Mammary epithelial cell (primary cell): ENCODE measurements at regions of chr1 and their contacts with region 1.

Region 1: GRCh38 chr1:43934101-43934985 is 742 bp downstream of the ARTN start:
- DNase-seq: peak; percentile 71
- H3K4me3 ChIP-seq: peak overlapping the region; percentile 69 to 74 (median 70)
- H3K27ac ChIP-seq: peak overlapping the region; percentile 81
- H3K4me1 ChIP-seq: peaks cover 73% of the 10 kb centered on the region
- H3K27me3 ChIP-seq: no peaks in the 10 kb centered on the region
- CTCF ChIP-seq: peak; percentile 89 to 95

Region 2: GRCh38 chr1:43238085-43238484 is 696.3 kb before region 1 on chr1:
- CTCF ChIA-PET with region 1: no interaction called
- dilution Hi-C with region 1: no loop called
- in situ Hi-C with region 1: no loop called
- intact Hi-C with region 1: loop called (anchors 10 kb)
- DNase-seq: peak; percentile 28
- H3K4me3 ChIP-seq: no peak overlapping the region
- H3K27ac ChIP-seq: no peak overlapping the region
- H3K4me1 ChIP-seq: peaks cover 7% of the 10 kb centered on the region
- H3K27me3 ChIP-seq: no peaks in the 10 kb centered on the region
- CTCF ChIP-seq: peak; percentile 85 to 93

Region 3: GRCh38 chr1:43706598-43707495 is 227.5 kb before region 1 on chr1:
- CTCF ChIA-PET with region 1: interaction called, 3 read pairs
- dilution Hi-C with region 1: no loop called
- in situ Hi-C with region 1: no loop called
- intact Hi-C with region 1: loop called (anchors 2 kb)
- DNase-seq: peak; percentile 89
- H3K4me3 ChIP-seq: peak overlapping the region; percentile 65 to 89 (median 67)
- H3K27ac ChIP-seq: peak overlapping the region; percentile 8
- H3K4me1 ChIP-seq: peaks cover 33% of the 10 kb centered on the region
- H3K27me3 ChIP-seq: no peaks in the 10 kb centered on the region
- CTCF ChIP-seq: no peak

Region 4: DNA sequence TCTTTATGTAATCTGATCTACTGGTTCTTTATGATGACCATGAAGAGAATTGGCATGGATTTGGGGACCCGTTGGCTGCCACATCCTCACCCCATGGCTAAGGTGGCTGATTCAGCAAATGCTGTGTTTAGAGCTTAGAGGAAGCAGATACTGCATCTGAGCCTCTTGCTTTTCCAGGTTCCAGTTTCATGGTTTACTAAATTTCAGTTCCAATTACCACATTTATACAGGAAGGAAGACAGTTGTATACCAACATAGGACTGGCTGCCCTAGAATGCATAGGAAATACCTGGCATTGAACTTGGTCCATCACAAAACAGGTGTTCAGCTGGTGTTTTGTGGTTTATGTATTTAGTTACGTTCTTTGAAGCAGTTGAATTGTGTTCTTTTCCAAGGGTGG is 119.9 kb before region 1 on chr1:
- CTCF ChIA-PET with region 1: no interaction called
- dilution Hi-C with region 1: no loop called
- in situ Hi-C with region 1: no loop called
- intact Hi-C with region 1: no loop called
- DNase-seq: no peak
- H3K4me3 ChIP-seq: no peak overlapping the region
- H3K27ac ChIP-seq: no peak overlapping the region
- H3K4me1 ChIP-seq: no peaks in the 10 kb centered on the region
- H3K27me3 ChIP-seq: no peaks in the 10 kb centered on the region
- CTCF ChIP-seq: no peak

Region 5: GRCh38 chr1:43858328-43858731 is 76.0 kb before region 1 on chr1:
- CTCF ChIA-PET with region 1: interaction called, 7 read pairs
- dilution Hi-C with region 1: loop called (anchors 5 kb)
- in situ Hi-C with region 1: no loop called
- intact Hi-C with region 1: loop called (anchors 1 kb)
- DNase-seq: peak; percentile 99
- H3K4me3 ChIP-seq: no peak overlapping the region
- H3K27ac ChIP-seq: peak overlapping the region; percentile 20
- H3K4me1 ChIP-seq: peaks cover 41% of the 10 kb centered on the region
- H3K27me3 ChIP-seq: no peaks in the 10 kb centered on the region
- CTCF ChIP-seq: no peak

Region 6: GRCh38 chr1:43946236-43947060 is 12.1 kb after region 1 on chr1 and contains the start of gene IPO13:
- CTCF ChIA-PET with region 1: interaction called, 5 read pairs
- dilution Hi-C with region 1: no loop called
- in situ Hi-C with region 1: no loop called
- intact Hi-C with region 1: loop called (anchors 1 kb)
- DNase-seq: peak; percentile 96
- H3K4me3 ChIP-seq: peak within 1 kb of the TSS; percentile 89 to 97 (median 96)
- H3K27ac ChIP-seq: peak within 1 kb of the TSS; percentile 84
- H3K4me1 ChIP-seq: peaks cover 19% of the 10 kb centered on the region
- H3K27me3 ChIP-seq: no peaks in the 10 kb centered on the region
- CTCF ChIP-seq: peak; percentile 35 to 82
- total RNA-seq, gene IPO13: 35.5 to 53.0 TPM

Region 7: DNA sequence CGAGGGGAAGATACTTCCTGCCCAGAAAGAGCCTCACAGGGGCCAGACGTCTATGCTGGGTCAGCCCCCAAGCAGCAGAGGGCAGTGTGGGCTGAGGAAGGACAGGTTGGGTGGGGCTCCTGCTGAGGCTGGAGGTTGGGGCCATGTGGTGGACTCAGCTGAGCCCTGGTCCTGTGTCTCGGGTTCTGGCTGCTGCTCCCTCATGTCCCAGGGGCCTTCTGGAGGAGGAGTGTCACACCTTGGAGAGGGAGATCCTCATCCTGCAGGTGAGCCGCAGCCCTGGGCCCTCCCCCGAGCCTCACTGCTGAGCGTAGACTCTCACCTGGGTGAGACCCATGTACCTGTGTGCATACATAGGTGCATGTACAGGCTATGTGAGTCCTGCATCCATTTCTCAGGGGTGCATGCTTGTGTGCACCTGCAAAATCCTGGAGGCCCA is 60.6 kb after region 1 on chr1:
- CTCF ChIA-PET with region 1: no interaction called
- dilution Hi-C with region 1: no loop called
- in situ Hi-C with region 1: no loop called
- intact Hi-C with region 1: no loop called
- DNase-seq: no peak
- H3K4me3 ChIP-seq: no peak overlapping the region
- H3K27ac ChIP-seq: no peak overlapping the region
- H3K4me1 ChIP-seq: peaks cover 14% of the 10 kb centered on the region
- H3K27me3 ChIP-seq: no peaks in the 10 kb centered on the region
- CTCF ChIP-seq: peak; percentile 18 to 39

Region 8: DNA sequence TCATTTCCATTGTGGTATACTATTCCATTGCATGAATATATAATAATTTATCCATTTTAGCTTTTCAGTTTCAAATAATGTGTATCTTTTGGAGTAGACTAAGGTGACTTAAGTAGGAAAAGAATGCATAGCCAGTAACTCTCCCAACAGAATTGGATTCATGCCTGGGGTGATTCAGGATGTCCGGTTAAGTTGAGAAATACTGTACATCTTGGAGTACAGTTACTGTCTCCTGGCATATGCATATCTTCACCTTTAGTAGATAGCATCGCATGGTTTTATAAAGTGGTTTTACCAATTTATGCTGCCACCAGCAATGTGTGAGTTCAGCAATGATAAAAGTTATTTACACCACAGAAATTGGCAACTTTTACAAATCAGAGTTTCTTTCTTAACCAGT is 115.5 kb after region 1 on chr1:
- CTCF ChIA-PET with region 1: interaction called, 3 read pairs
- dilution Hi-C with region 1: no loop called
- in situ Hi-C with region 1: loop called in 1 of 2 experiments (anchors 10 kb)
- intact Hi-C with region 1: loop called (anchors 1 kb)
- DNase-seq: peak; percentile 90
- H3K4me3 ChIP-seq: no peak overlapping the region
- H3K27ac ChIP-seq: peak overlapping the region; percentile 18
- H3K4me1 ChIP-seq: peaks cover 36% of the 10 kb centered on the region
- H3K27me3 ChIP-seq: no peaks in the 10 kb centered on the region
- CTCF ChIP-seq: no peak